Caco-2 (cell line): ENCODE measurements at regions of chr10 and their contacts with region 1.

Region 1: DNA sequence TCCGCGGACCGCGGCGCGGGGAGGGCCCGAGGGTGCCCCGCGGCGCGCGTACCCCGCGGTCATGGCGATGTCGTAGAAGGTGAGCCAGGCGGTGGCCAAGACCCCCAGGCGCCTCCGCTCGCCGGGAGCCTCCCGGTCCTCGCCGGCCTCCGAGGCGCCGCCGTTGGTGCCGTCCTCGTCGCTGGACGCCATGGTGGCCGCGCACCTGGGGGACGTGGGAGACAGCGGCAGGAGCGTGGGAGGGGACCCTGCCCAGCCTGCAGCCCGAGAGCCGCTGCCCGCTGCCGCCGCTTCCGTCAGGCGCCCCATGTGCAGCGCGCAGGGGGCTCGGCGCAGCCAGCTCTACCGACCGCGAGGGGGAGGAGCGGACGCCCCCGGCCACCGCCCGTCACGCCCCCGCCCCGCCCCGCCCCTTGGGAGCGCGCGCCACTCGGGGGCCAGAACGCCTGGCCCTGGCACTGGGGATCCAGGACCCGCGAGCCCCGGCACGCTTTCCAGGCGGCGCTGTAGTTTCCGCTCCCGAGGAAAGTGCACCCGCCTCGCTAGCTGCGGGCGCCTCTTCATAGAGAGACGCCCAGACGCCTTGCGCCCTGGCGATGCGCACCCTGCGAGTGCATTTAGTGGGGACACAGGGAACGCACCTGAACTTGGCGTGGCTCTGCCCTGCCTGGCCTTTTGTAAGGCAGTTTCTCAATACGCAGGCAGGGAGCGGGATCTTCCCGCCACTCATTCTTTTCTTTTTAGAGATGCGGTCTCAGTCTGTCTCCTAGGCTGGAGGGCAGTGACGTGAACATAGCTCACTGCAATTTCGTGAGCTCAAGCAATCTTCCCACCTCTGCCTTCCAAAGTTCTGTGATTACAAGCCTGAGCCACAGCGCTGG is at the start of gene HACD1:
- DNase-seq: peak; percentile 87 to 92
- H3K4me3 ChIP-seq: peak within 1 kb of the TSS; percentile 98
- H3K4me3 Mint-ChIP-seq: peak within 1 kb of the TSS; percentile 97
- H3K27ac Mint-ChIP-seq: peak within 1 kb of the TSS; percentile 88
- H3K4me1 ChIP-seq: no peaks in the 10 kb centered on the region; the same call in 1 of the 2 replicates
- H3K4me1 Mint-ChIP-seq: peaks cover 5% of the 10 kb centered on the region
- H3K27me3 ChIP-seq: no peaks in the 10 kb centered on the region
- H3K27me3 Mint-ChIP-seq: peaks cover 3% of the 10 kb centered on the region
- CTCF ChIP-seq: peak in 1 of 2 experiments; percentile 62
- total RNA-seq, gene HACD1: 37.2 and 47.8 TPM in 2 replicates

Region 2: DNA sequence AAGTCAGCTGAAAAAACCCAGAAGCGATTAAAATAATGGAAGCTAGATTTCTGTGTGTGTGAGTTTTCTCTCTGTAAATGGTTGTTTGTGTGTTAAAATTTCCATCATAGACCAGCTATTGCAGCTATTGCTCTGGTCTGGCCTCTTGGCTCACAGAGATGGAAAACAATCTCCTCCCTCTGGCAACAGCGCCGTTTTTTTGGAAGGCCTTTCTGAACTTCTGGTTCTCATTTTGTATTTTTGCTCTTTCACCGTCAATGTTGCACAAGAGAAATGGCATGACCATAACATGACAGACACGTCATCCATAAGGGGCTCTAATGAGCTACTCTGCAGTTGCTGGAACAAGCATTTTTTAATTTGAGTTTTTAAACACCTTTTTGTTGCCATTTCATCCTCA is 578.6 kb before region 1 on chr10:
- CTCF ChIA-PET with region 1: no interaction called
- POLR2A ChIA-PET with region 1: no interaction called
- intact Hi-C with region 1: no loop called
- DNase-seq: no peak
- H3K4me3 ChIP-seq: no peak overlapping the region
- H3K4me3 Mint-ChIP-seq: no peak overlapping the region
- H3K27ac Mint-ChIP-seq: no peak overlapping the region
- H3K4me1 ChIP-seq: no peaks in the 10 kb centered on the region; the same call in 1 of the 2 replicates
- H3K4me1 Mint-ChIP-seq: no peaks in the 10 kb centered on the region
- H3K27me3 ChIP-seq: no peaks in the 10 kb centered on the region
- H3K27me3 Mint-ChIP-seq: no peaks in the 10 kb centered on the region
- CTCF ChIP-seq: no peak

Region 3: DNA sequence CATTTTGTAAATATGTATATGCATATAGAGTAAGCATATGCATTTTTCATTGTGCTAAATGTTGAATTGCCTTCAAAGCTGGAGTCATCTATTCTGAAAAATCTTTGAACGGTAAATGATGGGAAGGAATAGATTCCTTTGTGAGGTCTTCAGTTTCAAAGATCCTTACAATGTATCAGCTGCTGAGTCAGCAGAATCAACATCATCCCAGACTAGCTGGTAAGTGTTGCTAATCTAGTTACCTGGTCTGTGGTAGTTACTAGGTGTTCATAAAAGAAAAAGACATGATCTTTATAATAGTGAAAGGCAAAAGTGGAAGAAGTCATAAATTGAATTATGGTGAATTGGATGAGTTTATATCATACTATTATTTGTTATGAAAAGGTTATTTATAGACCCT is 16.1 kb after region 1 on chr10:
- CTCF ChIA-PET with region 1: interaction called, 4 read pairs
- POLR2A ChIA-PET with region 1: no interaction called
- intact Hi-C with region 1: loop called (anchors 2 kb)
- DNase-seq: no peak
- H3K4me3 ChIP-seq: no peak overlapping the region
- H3K4me3 Mint-ChIP-seq: no peak overlapping the region
- H3K27ac Mint-ChIP-seq: no peak overlapping the region
- H3K4me1 ChIP-seq: no peaks in the 10 kb centered on the region
- H3K4me1 Mint-ChIP-seq: no peaks in the 10 kb centered on the region
- H3K27me3 ChIP-seq: no peaks in the 10 kb centered on the region
- H3K27me3 Mint-ChIP-seq: no peaks in the 10 kb centered on the region
- CTCF ChIP-seq: no peak

Region 4: DNA sequence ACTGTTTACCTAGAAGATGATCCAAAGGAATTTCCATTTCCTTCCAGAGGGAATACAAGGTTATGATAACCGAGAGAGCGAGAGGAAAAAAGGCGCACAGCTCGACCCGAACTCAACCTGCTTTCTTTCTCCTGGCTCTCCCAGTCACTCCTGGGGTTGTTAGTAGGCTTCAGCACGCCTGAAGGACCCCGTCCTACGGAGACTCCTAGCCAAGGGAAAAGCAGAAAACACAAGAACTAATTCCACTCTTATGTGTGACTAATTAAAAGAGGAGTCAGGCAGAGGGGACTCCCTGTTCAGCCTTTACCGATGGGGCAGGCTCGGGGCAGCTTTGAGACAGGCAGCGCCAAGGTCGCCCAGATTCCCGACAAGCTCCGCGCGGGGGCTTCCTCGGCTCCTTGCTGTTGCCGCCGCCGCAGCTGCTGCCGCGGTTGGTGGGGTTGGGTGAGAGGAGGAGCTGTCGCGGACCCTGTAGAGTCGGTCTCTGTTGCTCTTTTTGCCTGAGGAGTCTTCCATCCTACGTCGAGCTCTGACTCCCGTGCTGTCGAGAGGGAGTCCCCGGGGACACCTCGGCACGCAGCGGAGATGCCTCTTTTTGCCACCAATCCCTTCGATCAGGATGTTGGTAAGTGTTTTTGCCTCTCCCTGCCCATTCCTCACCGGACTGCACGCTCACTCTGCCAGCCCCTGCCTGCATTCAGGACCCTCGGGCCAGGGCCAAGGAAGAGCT is 26.6 kb after region 1 on chr10 and contains the start of gene STAM:
- CTCF ChIA-PET with region 1: interaction called, 32 read pairs
- POLR2A ChIA-PET with region 1: interaction called, 80 read pairs
- intact Hi-C with region 1: loop called (anchors 1 kb)
- DNase-seq: peak; percentile 96
- H3K4me3 ChIP-seq: peak within 1 kb of the TSS; percentile 58
- H3K4me3 Mint-ChIP-seq: peak within 1 kb of the TSS; percentile 94
- H3K27ac Mint-ChIP-seq: peak within 1 kb of the TSS; percentile 100
- H3K4me1 ChIP-seq: peaks cover 11% of the 10 kb centered on the region
- H3K4me1 Mint-ChIP-seq: peaks cover 22% of the 10 kb centered on the region
- H3K27me3 ChIP-seq: no peaks in the 10 kb centered on the region
- H3K27me3 Mint-ChIP-seq: no peaks in the 10 kb centered on the region
- CTCF ChIP-seq: no peak
- total RNA-seq, gene STAM: 51.9 and 59.1 TPM in 2 replicates

Region 5: GRCh38 chr10:17649836-17650235 is 32.6 kb after region 1 on chr10:
- CTCF ChIA-PET with region 1: interaction called, 32 read pairs
- POLR2A ChIA-PET with region 1: interaction called, 80 read pairs
- intact Hi-C with region 1: no loop called
- DNase-seq: no peak
- H3K4me3 ChIP-seq: no peak overlapping the region
- H3K4me3 Mint-ChIP-seq: no peak overlapping the region
- H3K27ac Mint-ChIP-seq: peak overlapping the region; percentile 83
- H3K4me1 ChIP-seq: peaks cover 37% of the 10 kb centered on the region
- H3K4me1 Mint-ChIP-seq: peaks cover 29% of the 10 kb centered on the region
- H3K27me3 ChIP-seq: no peaks in the 10 kb centered on the region
- H3K27me3 Mint-ChIP-seq: no peaks in the 10 kb centered on the region
- CTCF ChIP-seq: no peak

Region 6: DNA sequence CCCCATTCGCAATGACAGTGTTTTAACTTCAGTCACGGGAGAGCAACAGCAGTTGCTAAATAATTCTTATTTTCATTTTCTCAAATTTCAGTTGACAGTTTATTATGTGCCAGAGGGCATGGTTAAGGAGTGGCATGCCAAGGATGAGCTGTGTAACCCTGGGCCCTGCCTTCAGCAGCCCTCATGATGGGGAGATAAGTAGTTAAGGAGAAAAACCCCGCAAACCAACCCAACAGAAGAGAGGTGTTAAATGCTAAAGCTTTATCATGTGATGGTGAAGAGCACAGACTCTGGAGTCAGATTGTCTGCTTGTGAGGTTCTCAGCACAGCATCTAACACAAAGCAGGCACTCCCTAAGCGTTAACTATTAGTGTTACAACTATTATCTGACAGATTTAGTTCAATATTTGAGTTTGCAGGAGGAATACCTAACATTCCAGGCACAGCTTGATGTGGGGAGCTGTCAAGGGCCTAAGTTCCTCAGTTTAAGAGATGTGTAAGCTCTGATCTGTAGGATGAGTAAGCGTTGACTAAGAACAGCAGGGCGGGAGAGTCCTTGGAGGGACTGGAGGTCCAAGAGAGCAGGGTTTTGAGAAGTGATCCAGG is 56.3 kb after region 1 on chr10:
- CTCF ChIA-PET with region 1: interaction called, 3 read pairs
- POLR2A ChIA-PET with region 1: interaction called, 15 read pairs
- intact Hi-C with region 1: loop called (anchors 2 kb)
- DNase-seq: peak; percentile 77 to 82
- H3K4me3 ChIP-seq: no peak overlapping the region
- H3K4me3 Mint-ChIP-seq: peak overlapping the region; percentile 40
- H3K27ac Mint-ChIP-seq: peak overlapping the region; percentile 64
- H3K4me1 ChIP-seq: peaks cover 50% of the 10 kb centered on the region
- H3K4me1 Mint-ChIP-seq: peaks cover 24% of the 10 kb centered on the region
- H3K27me3 ChIP-seq: no peaks in the 10 kb centered on the region
- H3K27me3 Mint-ChIP-seq: no peaks in the 10 kb centered on the region
- CTCF ChIP-seq: no peak

Region 7: GRCh38 chr10:17709492-17709891 is 92.2 kb after region 1 on chr10:
- CTCF ChIA-PET with region 1: interaction called, 8 read pairs
- POLR2A ChIA-PET with region 1: no interaction called
- intact Hi-C with region 1: loop called (anchors 5 kb)
- DNase-seq: no peak
- H3K4me3 ChIP-seq: no peak overlapping the region
- H3K4me3 Mint-ChIP-seq: no peak overlapping the region
- H3K27ac Mint-ChIP-seq: no peak overlapping the region
- H3K4me1 ChIP-seq: peaks cover 5% of the 10 kb centered on the region; the same call in 1 of the 2 replicates
- H3K4me1 Mint-ChIP-seq: no peaks in the 10 kb centered on the region
- H3K27me3 ChIP-seq: no peaks in the 10 kb centered on the region
- H3K27me3 Mint-ChIP-seq: no peaks in the 10 kb centered on the region
- CTCF ChIP-seq: no peak

Region 8: DNA sequence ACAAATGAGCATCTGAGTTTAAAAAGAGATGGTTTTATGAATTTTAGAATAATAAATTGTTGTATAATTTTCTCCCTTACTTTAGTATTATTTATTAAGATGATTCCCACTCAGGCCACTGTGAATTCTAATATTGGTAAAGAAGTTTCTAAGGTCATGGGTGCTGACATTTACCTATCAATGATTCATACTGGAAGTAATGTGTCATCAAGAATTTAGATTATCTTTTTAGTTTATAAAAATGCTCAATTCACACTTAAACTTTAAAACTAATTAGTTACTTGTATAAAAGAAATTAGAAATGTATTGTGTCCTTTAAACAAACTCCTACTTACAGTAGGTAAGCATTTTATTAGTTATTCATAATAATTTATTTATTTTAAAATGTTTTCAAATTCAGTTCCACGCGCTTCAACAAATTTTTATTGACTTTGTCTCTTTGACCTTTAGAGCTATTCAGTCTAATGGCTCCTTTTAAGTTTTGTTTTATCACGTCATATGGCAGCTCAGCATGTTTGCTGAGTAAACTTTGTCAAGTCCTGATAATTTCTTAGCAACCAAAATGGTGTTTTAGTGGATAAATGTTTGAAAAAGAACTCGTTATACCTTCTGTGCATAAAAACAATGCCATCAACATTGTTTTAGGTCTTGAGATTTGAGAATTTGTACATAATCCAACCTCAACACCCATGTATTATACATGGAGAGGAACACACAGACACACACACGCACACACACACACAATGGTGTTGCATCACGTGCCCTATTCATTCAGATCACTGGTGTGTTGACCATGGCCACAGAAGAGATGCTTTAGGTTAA is 176.8 kb after region 1 on chr10:
- CTCF ChIA-PET with region 1: no interaction called
- POLR2A ChIA-PET with region 1: interaction called, 15 read pairs
- intact Hi-C with region 1: no loop called
- DNase-seq: peak; percentile 69 to 74
- H3K4me3 ChIP-seq: no peak overlapping the region
- H3K4me3 Mint-ChIP-seq: peak overlapping the region; percentile 51
- H3K27ac Mint-ChIP-seq: peak overlapping the region; percentile 91
- H3K4me1 ChIP-seq: peaks cover 34% of the 10 kb centered on the region
- H3K4me1 Mint-ChIP-seq: peaks cover 27% of the 10 kb centered on the region
- H3K27me3 ChIP-seq: no peaks in the 10 kb centered on the region
- H3K27me3 Mint-ChIP-seq: no peaks in the 10 kb centered on the region
- CTCF ChIP-seq: no peak